A549 (cell line): ENCODE measurements at regions of chr18 and their contacts with region 1.

Region 1: DNA sequence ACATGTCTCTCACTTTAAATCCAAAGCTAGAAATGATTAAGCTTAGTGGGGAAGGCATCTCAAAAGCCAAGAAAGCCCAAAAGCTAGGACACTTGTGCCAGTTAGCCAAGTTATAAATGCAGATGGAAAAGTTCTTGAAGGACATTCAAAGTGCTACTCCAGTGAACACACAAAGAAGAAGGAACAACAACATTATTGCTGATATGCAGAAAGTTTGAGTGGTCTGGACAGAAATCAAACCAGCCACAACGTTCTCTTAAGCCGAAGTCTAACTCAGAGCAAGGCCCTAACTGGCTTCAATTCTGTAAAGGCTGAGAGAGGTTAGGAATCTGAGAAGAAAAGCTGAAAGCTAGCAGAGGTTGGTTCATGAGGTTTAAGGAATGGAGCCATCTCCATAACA is 49.0 kb downstream of the PPP4R1 start:
- DNase-seq: no peak
- ATAC-seq: no peak
- H3K4me3 ChIP-seq: no peak overlapping the region
- H3K27ac ChIP-seq: no peak overlapping the region
- H3K4me1 ChIP-seq: 0 out of 3 replicates have a peak, but pooled peaks cover under 1% of the 10 kb centered on the region
- CTCF ChIP-seq: no peak
- EP300 ChIP-seq: no peak
- POLR2A ChIP-seq: no peak
- RAD21 ChIP-seq: no peak

Region 2: GRCh38 chr18:9575558-9575957 is 10.2 kb after region 1 on chr18:
- CTCF ChIA-PET with region 1: interaction called, 19 read pairs
- POLR2A ChIA-PET with region 1: no interaction called
- DNase-seq: peak; percentile 44 to 95
- ATAC-seq: peak; percentile 97
- H3K4me3 ChIP-seq: no peak overlapping the region
- H3K27ac ChIP-seq: peak overlapping the region; percentile 12 to 64; a peak in 3 of 6 replicates
- H3K4me1 ChIP-seq: peaks cover 28% of the 10 kb centered on the region
- CTCF ChIP-seq: peak; percentile 64
- EP300 ChIP-seq: no peak
- POLR2A ChIP-seq: no peak
- RAD21 ChIP-seq: peak; percentile 82 to 90